Activated naive CD4-positive, alpha-beta T cell treated with anti-CD3 and anti-CD28 coated beads for 36 hours (primary cell): ENCODE measurements at regions of chr3 and their contacts with region 1.

Region 1: GRCh38 chr3:49358217-49358883 is at the start of gene GPX1:
- DNase-seq: peak; percentile 93
- H3K4me3 Mint-ChIP-seq: peak within 1 kb of the TSS; percentile 92
- H3K27ac Mint-ChIP-seq: peak within 1 kb of the TSS; percentile 94
- H3K4me1 Mint-ChIP-seq: peaks cover 23% of the 10 kb centered on the region
- H3K27me3 Mint-ChIP-seq: no peaks in the 10 kb centered on the region
- total RNA-seq, gene GPX1: 198 to 202 TPM

Region 2: GRCh38 chr3:48619541-48620517 is 738.5 kb before region 1 on chr3:
- CTCF ChIA-PET with region 1: no interaction called
- intact Hi-C with region 1: no loop called
- DNase-seq: no peak
- H3K4me3 Mint-ChIP-seq: no peak overlapping the region
- H3K27ac Mint-ChIP-seq: no peak overlapping the region
- H3K4me1 Mint-ChIP-seq: peaks cover 6% of the 10 kb centered on the region
- H3K27me3 Mint-ChIP-seq: no peaks in the 10 kb centered on the region

Region 3: GRCh38 chr3:49377483-49377882 is 19.1 kb after region 1 on chr3:
- CTCF ChIA-PET with region 1: no interaction called
- intact Hi-C with region 1: loop called (anchors 1 kb)
- DNase-seq: peak; percentile 89
- H3K4me3 Mint-ChIP-seq: no peak overlapping the region
- H3K27ac Mint-ChIP-seq: peak overlapping the region; percentile 87
- H3K4me1 Mint-ChIP-seq: peaks cover 43% of the 10 kb centered on the region
- H3K27me3 Mint-ChIP-seq: no peaks in the 10 kb centered on the region

Region 4: GRCh38 chr3:49454458-49454857 is 96.1 kb after region 1 on chr3:
- CTCF ChIA-PET with region 1: interaction called, 13 read pairs
- intact Hi-C with region 1: loop called (anchors 1 kb)
- DNase-seq: peak; percentile 30
- H3K4me3 Mint-ChIP-seq: no peak overlapping the region
- H3K27ac Mint-ChIP-seq: no peak overlapping the region
- H3K4me1 Mint-ChIP-seq: no peaks in the 10 kb centered on the region
- H3K27me3 Mint-ChIP-seq: no peaks in the 10 kb centered on the region